Calu3 (cell line): ENCODE measurements at regions of chr4 and their contacts with region 1.

Region 1: DNA sequence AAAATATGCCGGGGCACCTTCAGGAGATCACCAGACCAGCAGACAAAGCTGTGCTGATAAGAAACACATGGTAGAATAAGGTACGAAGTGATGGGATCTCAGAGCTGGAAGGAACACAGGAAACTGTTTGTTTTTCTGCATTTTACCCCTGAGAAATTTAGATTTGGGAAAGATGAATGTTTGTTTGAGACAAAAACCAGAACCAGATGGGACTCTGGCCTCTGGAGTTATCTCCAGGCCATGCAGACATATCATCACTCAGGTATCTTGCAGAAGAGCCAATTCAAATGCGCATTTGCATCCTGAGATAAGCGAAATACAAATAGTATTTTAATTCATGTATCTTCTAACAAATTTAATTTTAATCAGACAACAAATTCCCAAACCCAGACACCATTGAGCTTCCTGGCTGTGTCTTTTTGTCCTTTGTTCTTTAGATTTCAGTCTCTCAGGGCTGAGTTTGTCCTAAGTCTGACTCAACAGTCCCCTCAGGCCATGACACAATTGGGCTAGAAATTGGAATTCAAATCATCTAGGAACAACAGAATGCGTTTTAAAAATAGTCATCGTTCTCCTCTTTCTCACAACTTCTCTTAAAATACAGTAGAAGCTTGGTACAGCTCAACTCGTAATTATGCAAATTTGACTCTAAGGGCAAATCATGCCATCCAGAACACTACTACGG is 159.0 kb downstream of the PACRGL start:
- DNase-seq: no peak
- H3K4me3 Mint-ChIP-seq: no peak overlapping the region
- H3K27ac Mint-ChIP-seq: no peak overlapping the region
- H3K4me1 Mint-ChIP-seq: no peaks in the 10 kb centered on the region
- H3K27me3 Mint-ChIP-seq: no peaks in the 10 kb centered on the region
- CTCF ChIP-seq: no peak

Region 2: GRCh38 chr4:20687894-20688293 is 171.3 kb before region 1 on chr4:
- CTCF ChIA-PET with region 1: no interaction called
- intact Hi-C with region 1: no loop called
- DNase-seq: no peak
- H3K4me3 Mint-ChIP-seq: no peak overlapping the region
- H3K27ac Mint-ChIP-seq: no peak overlapping the region
- H3K4me1 Mint-ChIP-seq: no peaks in the 10 kb centered on the region
- H3K27me3 Mint-ChIP-seq: peaks cover 2% of the 10 kb centered on the region
- CTCF ChIP-seq: no peak

Region 3: DNA sequence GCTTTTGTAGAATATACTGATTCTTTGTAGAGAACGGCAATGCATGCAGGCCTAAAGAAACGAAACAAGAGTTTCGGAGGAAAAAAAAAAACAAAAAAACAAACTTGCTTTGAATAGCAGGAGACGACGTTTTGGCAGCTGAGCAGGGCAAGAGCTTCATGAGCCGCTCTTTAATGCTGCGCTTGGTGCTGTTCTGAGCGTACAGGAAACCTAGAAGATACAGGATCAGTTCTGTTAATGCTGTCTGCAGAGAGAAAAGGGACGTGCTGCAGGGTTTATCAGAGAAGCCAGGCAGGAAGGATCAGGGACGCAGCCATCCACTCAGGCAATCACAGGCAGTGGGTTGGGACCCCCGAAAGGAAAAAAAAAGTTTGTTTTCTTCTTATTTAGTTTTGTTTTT is 23.3 kb after region 1 on chr4:
- CTCF ChIA-PET with region 1: no interaction called
- intact Hi-C with region 1: loop called (anchors 1 kb)
- DNase-seq: no peak
- H3K4me3 Mint-ChIP-seq: peak overlapping the region; percentile 37
- H3K27ac Mint-ChIP-seq: no peak overlapping the region
- H3K4me1 Mint-ChIP-seq: peaks cover 18% of the 10 kb centered on the region
- H3K27me3 Mint-ChIP-seq: no peaks in the 10 kb centered on the region
- CTCF ChIP-seq: no peak